Left ventricle myocardium superior (tissue), 1 donor: ENCODE measurements at regions of chr2 and their contacts with region 1.

Region 1: GRCh38 chr2:68121873-68122679 is 35.6 kb upstream of the PNO1 start:
- DNase-seq: peak; percentile 91
- ATAC-seq: peak; percentile 80

Region 2: GRCh38 chr2:68282811-68283418 is 160.8 kb after region 1 on chr2:
- intact Hi-C with region 1: loop called (anchors 5 kb)
- DNase-seq: no peak
- ATAC-seq: no peak